Body of pancreas (tissue), 4 donors: ENCODE measurements at regions of chr2 and their contacts with region 1.

Region 1: GRCh38 chr2:628651-629050 is 48.6 kb downstream of the TMEM18 start:
- DNase-seq: no peak
- ATAC-seq: no peak
- H3K4me3 ChIP-seq: no peak overlapping the region
- H3K27ac ChIP-seq: no peak overlapping the region
- H3K4me1 ChIP-seq: no peaks in the 10 kb centered on the region
- H3K27me3 ChIP-seq: no peaks in the 10 kb centered on the region
- CTCF ChIP-seq: no peak
- POLR2A ChIP-seq: no peak

Region 2: DNA sequence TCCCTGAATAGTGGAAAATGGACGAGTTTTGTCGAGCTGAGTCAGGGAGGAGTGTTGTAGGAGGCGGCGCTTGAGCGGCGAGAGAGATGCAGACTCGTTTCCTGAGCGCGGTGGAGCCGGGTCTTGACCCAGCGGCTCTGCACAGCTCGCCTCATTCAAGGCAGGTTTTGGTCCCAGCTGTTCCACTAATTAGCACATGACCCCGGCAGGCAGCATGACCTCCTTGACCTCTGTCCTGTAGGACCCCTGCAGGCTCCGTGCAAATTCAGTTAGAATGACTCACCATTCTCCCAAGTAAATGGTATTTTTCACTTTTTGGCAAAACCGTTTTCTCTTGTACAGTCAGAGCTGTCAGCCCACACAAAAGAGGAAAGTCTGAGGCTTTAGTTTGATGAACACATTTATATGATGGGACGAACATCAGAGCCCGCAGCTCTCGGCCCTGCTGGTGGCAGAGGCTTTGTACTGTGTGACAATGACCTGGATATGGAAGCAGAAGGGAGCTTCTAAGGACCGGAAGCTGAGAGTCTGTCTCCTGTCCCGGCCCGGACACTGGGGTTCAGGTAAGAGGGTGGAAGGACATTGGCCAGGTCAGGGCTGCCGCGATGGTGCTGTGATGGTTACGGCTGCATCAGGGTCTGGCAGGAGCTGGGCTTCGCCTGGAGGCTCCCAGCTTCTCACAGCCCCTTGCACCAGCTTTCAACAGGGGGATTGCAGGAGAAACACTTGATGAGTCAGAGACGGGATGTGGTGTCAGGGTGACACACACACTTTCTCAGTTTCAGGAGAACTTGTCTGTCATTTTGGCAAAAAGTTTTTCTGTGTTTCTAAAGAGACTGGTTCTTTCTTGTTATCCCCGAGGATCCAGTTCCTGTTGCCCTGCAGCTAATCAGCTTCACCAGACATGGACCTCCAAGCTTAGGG is 310.9 kb before region 1 on chr2:
- intact Hi-C with region 1: no loop called
- DNase-seq: peak in 1 of 4 donors; percentile 30
- ATAC-seq: peak; percentile 50
- H3K4me3 ChIP-seq: no peak overlapping the region
- H3K27ac ChIP-seq: no peak overlapping the region
- H3K4me1 ChIP-seq: no peaks in the 10 kb centered on the region
- H3K27me3 ChIP-seq: no peaks in the 10 kb centered on the region
- CTCF ChIP-seq: no peak
- POLR2A ChIP-seq: no peak

Region 3: DNA sequence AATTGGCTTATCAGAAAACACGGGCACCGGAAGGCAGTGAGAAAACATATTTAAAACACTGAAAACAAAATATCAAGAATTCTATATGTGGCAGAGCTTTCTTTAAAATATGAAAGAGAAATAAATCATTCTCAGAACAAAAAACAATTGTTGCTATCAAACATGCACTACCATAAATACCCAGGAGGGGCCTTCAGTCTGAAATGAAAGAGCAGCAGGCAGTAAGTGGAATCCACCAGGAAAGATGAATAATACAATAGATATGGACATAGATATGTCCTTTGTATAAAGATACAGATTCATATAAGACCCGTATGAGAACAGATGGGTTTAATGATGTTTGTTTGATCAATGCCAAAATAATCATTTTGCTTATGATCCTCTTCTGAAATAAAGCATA is 93.4 kb before region 1 on chr2:
- intact Hi-C with region 1: loop called (anchors 10 kb)
- DNase-seq: no peak
- ATAC-seq: no peak
- H3K4me3 ChIP-seq: no peak overlapping the region
- H3K27ac ChIP-seq: no peak overlapping the region
- H3K4me1 ChIP-seq: no peaks in the 10 kb centered on the region
- H3K27me3 ChIP-seq: peaks cover 0 to 3% of the 10 kb centered on the region in 2 donors
- CTCF ChIP-seq: no peak
- POLR2A ChIP-seq: no peak